Right ventricle myocardium inferior (tissue), 1 donor: ENCODE measurements at regions of chr22 and their contacts with region 1.

Region 1: DNA sequence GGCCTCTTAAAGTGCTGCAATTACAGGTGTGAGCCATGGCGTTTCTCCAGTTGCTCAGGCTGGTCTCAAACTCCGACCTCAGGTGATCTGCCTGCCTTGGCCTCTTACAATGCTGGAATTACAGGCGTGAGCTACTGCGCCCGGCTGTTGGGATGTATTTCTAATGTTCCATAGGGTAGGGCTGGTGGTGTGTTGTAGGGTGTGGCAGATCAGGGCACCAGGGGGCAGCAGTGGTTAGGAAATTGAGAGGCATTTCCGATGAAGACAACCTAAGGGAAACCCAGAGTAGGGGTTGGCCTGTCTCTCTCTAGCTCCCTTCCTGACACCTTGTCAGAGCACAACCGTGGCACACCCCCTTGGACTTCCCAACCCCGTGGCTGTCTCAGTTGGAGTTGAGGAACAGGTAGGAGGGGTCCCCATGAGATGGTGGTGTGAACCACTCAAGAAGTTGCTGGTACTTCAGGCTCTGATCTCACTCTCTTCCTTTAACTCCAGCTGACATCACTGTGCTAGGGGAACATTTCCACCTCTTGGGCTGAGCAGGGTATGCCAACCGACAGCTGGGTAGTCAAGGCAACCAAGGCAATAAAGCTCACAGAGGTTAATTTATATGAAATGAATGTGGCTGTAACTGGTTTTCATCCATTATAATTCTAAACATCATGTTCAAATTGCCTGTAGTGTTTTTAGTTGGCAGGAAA is 33.0 kb downstream of the YWHAH start:
- DNase-seq: peak; percentile 80
- ATAC-seq: peak; percentile 86

Region 2: GRCh38 chr22:31917227-31917921 is 59.9 kb before region 1 on chr22:
- intact Hi-C with region 1: no loop called
- DNase-seq: no peak
- ATAC-seq: peak; percentile 64

Region 3: DNA sequence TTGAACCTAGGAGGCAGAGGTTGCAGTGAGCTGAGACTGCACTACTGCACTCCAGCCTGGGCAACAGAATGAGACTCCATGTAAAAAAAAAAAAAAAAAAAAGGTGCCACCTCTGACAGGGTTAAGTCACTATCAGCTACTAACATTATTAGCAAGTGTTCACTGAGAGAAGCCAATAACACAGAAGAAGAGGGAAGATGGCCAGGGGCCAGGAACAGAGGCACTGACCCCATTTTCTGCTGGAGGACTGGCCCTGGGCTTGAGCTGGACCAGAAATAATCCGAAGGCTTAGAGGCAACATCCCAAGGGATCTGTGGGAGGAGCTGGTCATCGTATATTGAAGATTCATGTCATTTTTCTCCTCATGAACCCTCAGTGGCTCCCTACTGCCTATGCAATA is 70.8 kb after region 1 on chr22:
- intact Hi-C with region 1: no loop called
- DNase-seq: no peak
- ATAC-seq: peak; percentile 70

Region 4: DNA sequence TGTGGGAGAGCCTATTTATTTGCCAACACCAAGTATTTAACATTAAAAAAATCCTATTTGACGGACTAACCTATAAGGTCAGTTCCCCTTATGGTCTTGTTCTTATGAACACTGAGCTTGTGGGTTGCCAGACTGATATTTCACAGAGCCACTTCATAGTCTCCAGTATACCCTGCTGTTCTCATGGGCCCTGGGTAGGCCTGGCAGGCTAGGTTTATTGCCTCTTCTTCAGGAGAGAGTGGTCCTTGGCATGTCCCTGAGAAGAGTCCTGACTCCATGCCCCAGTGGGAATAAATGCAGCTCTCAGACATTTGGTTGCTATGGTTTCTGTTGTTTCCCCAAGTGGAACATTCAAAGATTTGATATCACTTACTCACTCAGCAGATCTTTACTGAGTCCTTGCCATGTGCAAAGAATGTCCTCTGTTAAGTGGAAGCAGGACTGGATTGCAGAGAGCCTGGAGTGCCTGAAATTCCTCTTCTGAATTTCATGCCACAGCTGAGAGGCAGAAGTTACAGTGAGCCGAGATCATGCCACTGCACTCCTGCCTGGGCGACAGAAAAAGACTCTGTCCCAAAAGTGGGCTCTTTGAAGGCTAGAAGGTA is 81.5 kb after region 1 on chr22:
- intact Hi-C with region 1: loop called (anchors 5 kb)
- DNase-seq: no peak
- ATAC-seq: peak; percentile 85

Region 5: GRCh38 chr22:32080904-32081303 is 103.6 kb after region 1 on chr22:
- intact Hi-C with region 1: loop called (anchors 5 kb)
- DNase-seq: no peak
- ATAC-seq: no peak

Region 6: GRCh38 chr22:32202539-32203180 is 225.4 kb after region 1 on chr22:
- intact Hi-C with region 1: loop called (anchors 5 kb)
- DNase-seq: no peak
- ATAC-seq: peak; percentile 66

Region 7: GRCh38 chr22:32474635-32475467 is 497.6 kb after region 1 on chr22 and contains the start of gene FBXO7:
- intact Hi-C with region 1: loop called (anchors 5 kb)
- DNase-seq: peak; percentile 97
- ATAC-seq: peak; percentile 92
- total RNA-seq, gene FBXO7: 35.8 TPM